HepG2 (cell line): ENCODE measurements at regions of chr18 and their contacts with region 1.

Region 1: DNA sequence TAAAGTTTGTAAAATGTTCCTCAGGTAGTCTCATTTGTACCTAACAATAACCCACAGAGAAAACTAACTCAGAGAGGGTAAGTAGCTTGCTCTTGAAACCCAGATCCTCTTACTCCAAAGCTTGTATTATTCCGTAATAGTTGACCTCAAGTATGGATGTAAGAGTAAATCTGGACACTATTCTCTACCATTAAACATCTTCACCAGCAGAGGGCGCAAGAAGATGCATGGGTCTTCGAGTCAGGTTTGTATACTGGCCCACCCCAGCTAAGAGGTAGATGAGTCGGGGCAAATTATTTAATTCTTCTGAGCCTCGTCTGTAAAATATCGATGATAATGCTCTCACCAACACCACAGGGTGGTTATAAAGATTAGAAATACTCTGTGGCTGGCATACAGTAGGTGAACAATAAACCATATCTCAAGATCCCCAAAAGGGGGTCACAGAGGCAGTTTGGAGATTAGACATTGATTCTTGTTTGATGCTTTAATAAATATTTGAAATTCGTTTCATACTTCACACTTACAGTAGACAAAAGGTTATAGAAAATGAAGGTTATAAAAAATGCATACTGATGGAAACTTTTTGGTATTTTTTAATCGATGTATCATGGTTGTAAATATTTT is 3.5 kb upstream of the CABLES1 start:
- DNase-seq: peak; percentile 75
- ATAC-seq: no peak
- H3K4me3 ChIP-seq: no peak overlapping the region
- H3K27ac ChIP-seq: no peak overlapping the region
- H3K4me1 ChIP-seq: peaks cover 50% of the 10 kb centered on the region
- H3K27me3 ChIP-seq: no peaks in the 10 kb centered on the region; a peak in 1 of 5 replicates
- CTCF ChIP-seq: peak; percentile 82
- EP300 ChIP-seq: no peak
- POLR2A ChIP-seq: no peak
- RAD21 ChIP-seq: peak; percentile 54

Region 2: DNA sequence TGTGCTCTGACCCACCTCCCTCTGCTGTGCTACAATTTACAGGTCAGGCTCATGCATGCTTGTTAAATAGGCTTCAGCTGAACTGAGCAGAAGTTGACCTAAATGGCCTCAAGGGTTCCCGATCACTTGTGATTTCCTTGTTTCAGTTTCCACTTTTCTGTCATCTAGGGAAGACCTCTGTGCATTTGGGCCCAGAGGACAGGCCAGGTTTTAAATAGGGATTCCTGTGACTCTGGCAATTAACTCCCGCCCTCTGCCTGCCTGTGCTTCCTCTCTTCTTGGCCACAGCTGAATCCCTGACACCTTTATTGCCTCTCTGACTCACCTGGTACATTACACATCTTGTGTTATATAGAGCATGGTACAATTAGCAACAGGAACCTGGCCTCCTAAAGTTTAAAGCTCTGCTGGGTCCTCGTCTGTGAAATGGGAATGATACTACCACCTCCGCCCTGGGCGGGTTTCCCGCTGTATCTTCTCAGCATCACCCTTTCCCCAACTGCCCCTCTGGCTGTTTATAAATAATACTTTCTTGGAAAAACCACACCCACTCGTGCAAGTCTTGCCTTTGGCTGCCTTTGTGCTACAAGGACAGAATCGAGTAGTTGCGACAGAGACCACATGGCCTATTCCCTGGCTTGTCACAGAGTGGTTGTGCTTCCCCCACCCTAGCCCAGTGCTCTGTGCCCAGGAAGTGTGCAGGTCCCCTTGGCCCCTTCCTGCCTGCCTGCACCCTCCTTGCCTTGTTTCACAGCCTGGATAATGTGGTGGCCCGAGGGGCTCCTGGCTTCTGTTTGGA is 11.4 kb after region 1 on chr18:
- CTCF ChIA-PET with region 1: no interaction called
- POLR2A ChIA-PET with region 1: interaction called, 17 read pairs
- in situ Hi-C with region 1: no loop called
- intact Hi-C with region 1: no loop called
- DNase-seq: no peak
- ATAC-seq: no peak
- H3K4me3 ChIP-seq: no peak overlapping the region
- H3K27ac ChIP-seq: peak overlapping the region; percentile 96
- H3K4me1 ChIP-seq: peaks cover 98% of the 10 kb centered on the region
- H3K27me3 ChIP-seq: no peaks in the 10 kb centered on the region; a peak in 1 of 5 replicates
- CTCF ChIP-seq: no peak
- EP300 ChIP-seq: no peak
- POLR2A ChIP-seq: no peak
- RAD21 ChIP-seq: no peak

Region 3: GRCh38 chr18:23207191-23207955 is 75.6 kb after region 1 on chr18:
- CTCF ChIA-PET with region 1: interaction called, 6 read pairs
- POLR2A ChIA-PET with region 1: interaction called, 4 read pairs
- in situ Hi-C with region 1: no loop called
- intact Hi-C with region 1: loop called (anchors 2 kb)
- DNase-seq: peak; percentile 13
- ATAC-seq: peak; percentile 54
- H3K4me3 ChIP-seq: no peak overlapping the region
- H3K27ac ChIP-seq: no peak overlapping the region
- H3K4me1 ChIP-seq: 0 out of 2 replicates have a peak, but pooled peaks cover 5% of the 10 kb centered on the region
- H3K27me3 ChIP-seq: no peaks in the 10 kb centered on the region
- CTCF ChIP-seq: peak; percentile 43
- EP300 ChIP-seq: no peak
- POLR2A ChIP-seq: no peak
- RAD21 ChIP-seq: no peak

Region 4: GRCh38 chr18:23401400-23402347 is 269.9 kb after region 1 on chr18:
- CTCF ChIA-PET with region 1: no interaction called
- POLR2A ChIA-PET with region 1: interaction called, 13 read pairs
- in situ Hi-C with region 1: no loop called
- intact Hi-C with region 1: no loop called
- DNase-seq: peak; percentile 81
- ATAC-seq: peak; percentile 96
- H3K4me3 ChIP-seq: peak overlapping the region in 1 of 3 experiments; percentile 38; a peak in 1 of 6 replicates
- H3K27ac ChIP-seq: peak overlapping the region; percentile 83
- H3K4me1 ChIP-seq: peaks cover 46% of the 10 kb centered on the region
- H3K27me3 ChIP-seq: no peaks in the 10 kb centered on the region
- CTCF ChIP-seq: no peak
- EP300 ChIP-seq: peak in 1 of 2 experiments; percentile 82; a peak in 2 of 4 replicates
- POLR2A ChIP-seq: no peak
- RAD21 ChIP-seq: no peak

Region 5: GRCh38 chr18:23703057-23703986 is 571.5 kb after region 1 on chr18:
- CTCF ChIA-PET with region 1: no interaction called
- POLR2A ChIA-PET with region 1: no interaction called
- in situ Hi-C with region 1: no loop called
- intact Hi-C with region 1: no loop called
- DNase-seq: peak; percentile 50
- ATAC-seq: peak; percentile 89
- H3K4me3 ChIP-seq: no peak overlapping the region
- H3K27ac ChIP-seq: no peak overlapping the region
- H3K4me1 ChIP-seq: no peaks in the 10 kb centered on the region
- H3K27me3 ChIP-seq: peaks cover 2 to 7% of the 10 kb centered on the region in 2 experiments; a peak in 3 of 5 replicates
- CTCF ChIP-seq: peak; percentile 75
- EP300 ChIP-seq: no peak
- POLR2A ChIP-seq: no peak
- RAD21 ChIP-seq: peak; percentile 71; the same call in 1 of the 2 replicates